ENCODE measurements at regions of chr10 and their contacts with region 1.

Region 1: GRCh38 chr10:31864834-31865518 is 63.7 kb downstream of the ARHGAP12 start:
- DNase-seq: no peak
- H3K4me3 ChIP-seq: no peak overlapping the region
- H3K4me1 ChIP-seq: peaks cover 16% of the 10 kb centered on the region
- H3K27me3 ChIP-seq: no peaks in the 10 kb centered on the region

Region 2: GRCh38 chr10:31083765-31084184 is 781.2 kb before region 1 on chr10:
- in situ Hi-C with region 1: no loop called
- DNase-seq: peak; percentile 34 to 67
- H3K4me3 ChIP-seq: no peak overlapping the region
- H3K4me1 ChIP-seq: no peaks in the 10 kb centered on the region; the same call in 1 of the 2 replicates
- H3K27me3 ChIP-seq: no peaks in the 10 kb centered on the region

Region 3: GRCh38 chr10:31288962-31289361 is 576.0 kb before region 1 on chr10:
- in situ Hi-C with region 1: no loop called
- DNase-seq: no peak
- H3K4me3 ChIP-seq: no peak overlapping the region
- H3K4me1 ChIP-seq: no peaks in the 10 kb centered on the region
- H3K27me3 ChIP-seq: no peaks in the 10 kb centered on the region

Region 4: GRCh38 chr10:31586723-31587638 is 278.0 kb before region 1 on chr10:
- in situ Hi-C with region 1: no loop called
- DNase-seq: no peak
- H3K4me3 ChIP-seq: no peak overlapping the region
- H3K4me1 ChIP-seq: no peaks in the 10 kb centered on the region
- H3K27me3 ChIP-seq: no peaks in the 10 kb centered on the region

Region 5: GRCh38 chr10:32005050-32005449 is 140.1 kb after region 1 on chr10:
- in situ Hi-C with region 1: loop called (anchors 10 kb)
- DNase-seq: peak; percentile 33 to 48
- H3K4me3 ChIP-seq: no peak overlapping the region
- H3K4me1 ChIP-seq: peaks cover 16% of the 10 kb centered on the region
- H3K27me3 ChIP-seq: no peaks in the 10 kb centered on the region